ENCODE measurements at regions of chr12 and their contacts with region 1.

Region 1: DNA sequence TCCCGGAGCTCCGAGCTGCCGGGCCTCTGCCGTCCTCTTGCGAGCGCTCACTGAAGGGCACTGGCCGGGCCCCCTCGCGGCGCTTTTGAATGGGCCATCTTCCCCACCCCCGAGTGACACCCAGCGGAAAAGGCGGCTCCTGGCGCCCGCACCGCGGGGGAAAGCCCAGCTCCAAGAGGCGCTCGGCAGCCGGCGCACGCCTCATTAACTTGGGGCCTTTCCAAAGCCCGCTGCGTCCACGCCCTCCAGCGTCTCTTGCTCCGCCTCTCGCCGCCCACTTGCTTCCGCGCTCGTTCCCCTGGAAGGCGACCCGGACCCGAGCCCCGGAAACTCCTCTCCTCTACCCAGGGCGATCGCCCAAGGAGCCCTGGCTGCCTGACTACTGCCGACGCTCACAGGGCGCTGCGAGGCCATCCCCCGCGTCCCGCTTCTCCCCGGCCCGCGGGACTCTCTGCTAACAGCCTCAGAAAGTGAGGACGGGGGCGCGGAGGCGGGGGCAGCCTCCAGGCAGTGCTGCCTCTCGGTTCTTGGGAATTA is at the start of gene PHLDA1:
- DNase-seq: peak; percentile 92 to 97 (median 96)
- H3K4me3 ChIP-seq: peak within 1 kb of the TSS; percentile 56
- H3K27ac ChIP-seq: peak within 1 kb of the TSS; percentile 94 to 96
- H3K4me1 ChIP-seq: peaks cover 5% of the 10 kb centered on the region
- H3K27me3 ChIP-seq: no peaks in the 10 kb centered on the region
- CTCF ChIP-seq: peak in 2 of 3 donors; percentile 76 to 79
- EP300 ChIP-seq: no peak
- POLR2A ChIP-seq: peak; percentile 80
- total RNA-seq, gene PHLDA1: 3.8 to 37.7 (median 19.6) TPM

Region 2: DNA sequence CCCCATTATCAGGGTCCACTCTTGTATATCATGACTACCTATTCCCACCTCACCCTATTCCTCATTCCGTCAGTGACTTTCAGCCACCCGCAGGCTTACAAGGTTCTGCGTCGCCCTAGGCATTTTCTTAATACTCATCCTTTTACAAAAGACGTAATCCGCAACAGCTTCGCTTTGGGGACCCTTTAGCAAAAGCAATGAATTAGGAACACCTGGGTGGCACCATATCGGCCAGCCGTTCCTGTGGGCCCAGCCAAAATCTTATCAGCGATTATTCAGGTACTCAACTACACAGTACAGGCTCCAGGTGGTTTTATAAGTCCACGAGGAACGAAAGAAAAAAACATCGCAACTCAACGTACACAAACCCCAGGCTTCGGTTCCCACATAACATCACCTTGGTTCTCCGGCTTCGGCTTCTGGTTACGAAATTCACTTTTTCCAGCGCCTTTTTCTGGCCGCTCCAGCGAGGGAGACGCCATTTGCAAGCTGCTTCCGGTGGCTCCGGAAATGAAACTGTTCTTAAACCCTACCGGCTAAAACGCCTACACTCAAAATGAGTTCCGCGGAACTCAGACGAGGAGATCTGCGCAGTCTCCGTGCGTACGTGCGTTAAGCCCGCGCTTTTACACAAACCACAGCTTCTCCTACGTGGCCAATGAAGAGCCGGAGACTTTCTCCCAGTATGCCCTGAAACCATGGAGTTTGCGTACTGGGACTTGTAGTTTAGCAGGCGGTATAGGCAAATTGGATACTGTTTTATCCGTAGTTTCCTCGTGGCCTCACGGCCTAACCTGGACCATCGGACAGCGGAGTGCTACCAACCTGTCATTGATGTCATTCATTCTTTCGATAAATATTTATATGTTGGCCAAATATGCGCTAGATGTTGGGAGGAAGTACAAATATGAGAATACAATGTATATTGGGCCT is 520.2 kb before region 1 on chr12 and contains the start of gene KRR1:
- intact Hi-C with region 1: loop called in 1 of 4 experiments (anchors 5 kb)
- DNase-seq: peak; percentile 86 to 92 (median 89)
- H3K4me3 ChIP-seq: peak within 1 kb of the TSS; percentile 74
- H3K27ac ChIP-seq: peak within 1 kb of the TSS in 1 of 2 donors; percentile 15
- H3K4me1 ChIP-seq: peaks cover 1% of the 10 kb centered on the region
- H3K27me3 ChIP-seq: no peaks in the 10 kb centered on the region
- CTCF ChIP-seq: peak in 2 of 3 donors; percentile 10
- EP300 ChIP-seq: no peak
- POLR2A ChIP-seq: no peak
- total RNA-seq, gene KRR1: 26.2 to 69.1 (median 48.7) TPM

Region 3: DNA sequence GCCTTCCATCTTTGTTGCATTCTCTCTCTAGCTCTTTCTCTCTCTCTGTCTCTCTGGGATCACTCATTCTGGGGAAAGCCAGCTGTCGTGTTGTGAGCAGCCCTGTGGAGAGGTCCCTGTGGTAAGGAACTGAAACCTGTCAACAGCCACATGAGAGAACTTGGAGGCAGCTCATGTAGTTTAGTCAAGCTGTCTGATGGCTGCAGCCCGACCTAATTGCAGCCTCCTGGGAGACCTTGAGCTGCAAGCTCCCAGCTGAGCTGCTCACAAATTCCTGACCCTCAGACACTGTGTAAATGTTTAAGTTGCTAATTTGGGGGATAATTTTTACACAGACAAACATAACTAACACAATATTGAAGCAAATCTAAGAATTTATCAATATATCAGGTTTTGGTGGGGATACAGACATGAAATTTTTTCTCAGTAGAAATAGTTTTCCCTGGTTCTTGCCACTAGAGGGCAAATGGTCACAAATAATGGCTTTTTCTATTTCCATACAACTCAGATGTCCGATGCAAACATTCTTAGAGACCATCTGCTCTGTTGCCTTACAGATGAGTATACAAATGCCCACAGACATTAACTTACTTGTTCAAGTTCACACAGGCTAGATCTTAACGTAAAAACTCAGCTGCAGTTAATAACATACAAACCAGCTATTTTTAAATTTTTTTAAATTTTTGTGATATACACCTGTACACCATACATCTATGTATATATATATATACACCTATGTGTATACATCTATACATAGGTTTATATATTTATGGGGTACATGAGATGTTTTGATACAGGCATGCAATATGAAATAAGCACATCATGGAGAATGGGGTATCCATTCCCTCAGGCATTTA is 504.7 kb before region 1 on chr12:
- intact Hi-C with region 1: loop called in 1 of 4 experiments (anchors 10 kb)
- DNase-seq: no peak
- H3K4me3 ChIP-seq: no peak overlapping the region
- H3K27ac ChIP-seq: no peak overlapping the region
- H3K4me1 ChIP-seq: no peaks in the 10 kb centered on the region
- H3K27me3 ChIP-seq: no peaks in the 10 kb centered on the region
- CTCF ChIP-seq: peak in 2 of 3 donors; percentile 48 to 61
- EP300 ChIP-seq: no peak
- POLR2A ChIP-seq: no peak

Region 4: GRCh38 chr12:75814851-75815754 is 216.5 kb before region 1 on chr12:
- intact Hi-C with region 1: loop called in 1 of 4 experiments (anchors 10 kb)
- DNase-seq: peak in 1 of 5 donors; percentile 51
- H3K4me3 ChIP-seq: no peak overlapping the region
- H3K27ac ChIP-seq: no peak overlapping the region
- H3K4me1 ChIP-seq: peaks cover 2% of the 10 kb centered on the region
- H3K27me3 ChIP-seq: no peaks in the 10 kb centered on the region
- CTCF ChIP-seq: no peak
- EP300 ChIP-seq: no peak
- POLR2A ChIP-seq: no peak

Region 5: DNA sequence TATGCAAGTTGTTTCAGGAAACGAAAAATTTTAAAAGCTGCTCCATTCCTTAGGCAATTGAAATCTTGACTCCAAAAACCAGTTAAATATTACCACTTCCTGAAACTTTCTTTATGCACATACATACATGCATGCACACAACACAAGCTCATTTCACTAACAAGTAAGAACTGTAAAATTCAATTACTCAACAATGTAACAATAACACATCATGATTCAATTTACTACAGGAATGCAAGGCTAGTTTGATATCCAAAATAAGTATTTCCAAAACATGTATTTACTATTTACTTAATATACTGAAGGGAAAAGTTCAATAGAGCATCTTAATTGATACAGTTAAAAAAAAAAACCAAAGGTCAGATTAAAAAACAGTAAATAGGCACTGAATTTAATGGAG is 33.3 kb after region 1 on chr12:
- intact Hi-C with region 1: no loop called
- DNase-seq: no peak
- H3K4me3 ChIP-seq: no peak overlapping the region
- H3K27ac ChIP-seq: no peak overlapping the region
- H3K4me1 ChIP-seq: no peaks in the 10 kb centered on the region
- H3K27me3 ChIP-seq: no peaks in the 10 kb centered on the region
- CTCF ChIP-seq: no peak
- EP300 ChIP-seq: no peak
- POLR2A ChIP-seq: no peak

Region 6: DNA sequence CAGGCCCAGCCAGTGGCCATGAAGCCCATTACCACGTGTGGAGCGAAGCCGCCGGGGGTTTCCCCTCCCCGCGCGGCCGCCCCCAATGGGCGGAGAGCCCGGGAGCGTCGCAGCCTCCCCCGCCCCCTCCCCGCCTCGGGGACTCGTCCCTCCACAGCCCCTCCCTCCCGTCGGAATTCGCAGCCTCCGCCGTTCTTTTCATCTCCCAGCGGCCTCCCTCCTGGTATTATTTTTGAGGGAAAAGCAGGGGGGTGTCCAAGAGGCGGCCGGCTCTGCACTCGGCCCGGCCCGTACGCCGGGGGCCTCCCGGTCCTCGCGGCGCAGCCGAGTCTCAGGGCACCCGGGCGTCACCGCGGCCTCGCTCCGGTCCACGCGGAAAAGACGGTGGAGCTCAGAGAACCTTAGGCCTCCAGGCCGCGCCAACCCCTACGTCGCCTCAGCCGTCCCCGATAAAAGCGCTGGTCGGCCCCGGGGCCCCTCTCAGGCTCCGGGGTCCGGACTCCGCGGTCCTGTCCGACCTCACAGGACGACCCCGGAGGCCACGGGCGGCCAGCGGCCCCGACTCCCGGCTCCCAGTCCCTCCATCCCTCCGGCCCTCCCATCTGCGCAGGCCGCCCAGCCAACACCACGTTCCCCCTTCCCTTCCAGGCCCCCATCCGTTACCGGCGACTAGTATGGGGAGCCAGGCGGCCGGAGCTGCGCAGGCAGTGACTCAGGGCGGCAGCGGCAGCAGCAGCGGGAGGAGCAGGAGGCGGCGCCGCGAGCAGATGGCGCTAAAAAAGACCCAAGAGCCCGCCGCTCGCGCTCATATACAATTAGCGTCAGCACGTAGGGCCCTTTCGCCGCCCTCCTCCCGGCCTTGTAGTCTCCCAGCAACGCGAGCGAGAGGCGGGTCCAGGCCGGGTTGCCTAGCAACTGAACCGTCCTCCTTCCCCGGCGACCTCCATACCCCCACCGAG is 52.6 kb after region 1 on chr12 and contains the start of gene NAP1L1:
- intact Hi-C with region 1: loop called in 1 of 4 experiments (anchors 2 kb)
- DNase-seq: peak; percentile 96 to 98 (median 98)
- H3K4me3 ChIP-seq: peak within 1 kb of the TSS; percentile 81
- H3K27ac ChIP-seq: peak within 1 kb of the TSS; percentile 95 to 99
- H3K4me1 ChIP-seq: no peaks in the 10 kb centered on the region
- H3K27me3 ChIP-seq: no peaks in the 10 kb centered on the region
- CTCF ChIP-seq: no peak
- EP300 ChIP-seq: no peak
- POLR2A ChIP-seq: peak; percentile 84
- total RNA-seq, gene NAP1L1: 500 to 1,115 (median 750) TPM

Measured in ovary (tissue), 10 donors.